BJ (cell line): ENCODE measurements at regions of chr10 and their contacts with region 1.

Region 1: DNA sequence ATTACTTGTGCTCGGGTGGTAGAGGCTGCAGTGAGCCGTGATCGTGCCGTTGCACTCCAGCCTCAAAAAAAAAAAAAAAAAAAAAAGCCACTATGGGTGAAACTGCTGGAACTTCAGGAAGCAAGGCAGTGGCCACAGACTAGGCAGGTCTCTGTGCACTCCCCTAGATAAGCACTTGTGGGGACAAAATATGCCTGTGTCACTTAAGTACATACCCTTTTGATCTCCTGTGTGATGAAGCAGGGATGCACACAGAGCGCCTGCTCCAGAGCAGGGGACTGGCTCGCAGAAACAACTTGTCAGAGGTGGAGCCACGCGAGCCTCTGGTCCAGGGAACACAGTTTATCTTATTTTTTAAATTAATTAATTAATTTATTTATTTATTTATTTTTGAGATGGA is 42.9 kb upstream of the PSAP start:
- DNase-seq: no peak
- H3K4me3 ChIP-seq: no peak overlapping the region
- H3K27me3 ChIP-seq: no peaks in the 10 kb centered on the region
- CTCF ChIP-seq: no peak

Region 2: DNA sequence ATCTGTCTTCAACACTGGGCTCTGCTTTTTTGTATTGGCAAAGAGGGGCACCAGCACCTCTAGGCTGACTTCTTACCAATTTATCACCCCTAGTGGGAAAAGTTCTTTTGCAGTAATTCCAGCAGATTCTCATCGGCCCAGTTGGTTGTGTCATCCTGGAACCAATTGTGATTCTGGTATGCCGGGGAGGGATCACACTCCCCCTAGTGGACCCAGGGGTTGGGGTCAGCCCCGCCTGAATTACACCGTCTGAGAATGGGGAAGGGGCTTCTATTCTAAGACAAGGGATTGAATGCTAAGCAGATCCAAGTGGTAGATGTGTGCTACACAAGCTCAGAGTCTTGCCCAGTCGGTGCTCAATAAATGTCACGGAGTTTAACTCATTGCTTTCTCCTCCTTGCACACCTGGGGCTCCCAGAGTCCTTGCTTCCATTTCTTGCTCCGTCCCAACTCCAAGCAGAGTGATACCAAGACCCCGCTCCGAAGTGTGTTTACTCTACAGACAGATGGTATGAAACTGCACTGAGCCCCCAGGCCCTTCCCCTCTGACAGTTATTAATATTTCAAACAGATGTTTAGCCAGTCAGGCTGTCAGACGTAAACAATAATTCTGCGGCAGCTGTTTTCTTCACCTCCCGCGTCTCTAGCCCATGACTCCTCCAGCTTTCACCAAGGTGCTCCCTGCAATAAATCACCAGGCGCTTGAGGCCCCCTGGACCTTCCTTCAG is 246.2 kb before region 1 on chr10:
- CTCF ChIA-PET with region 1: no interaction called
- POLR2A ChIA-PET with region 1: no interaction called
- DNase-seq: no peak
- H3K4me3 ChIP-seq: no peak overlapping the region
- H3K27me3 ChIP-seq: peaks cover 11% of the 10 kb centered on the region
- CTCF ChIP-seq: peak; percentile 51

Region 3: GRCh38 chr10:71731791-71732190 is 162.1 kb before region 1 on chr10:
- CTCF ChIA-PET with region 1: no interaction called
- POLR2A ChIA-PET with region 1: no interaction called
- DNase-seq: no peak
- H3K4me3 ChIP-seq: no peak overlapping the region
- H3K27me3 ChIP-seq: no peaks in the 10 kb centered on the region
- CTCF ChIP-seq: no peak

Region 4: DNA sequence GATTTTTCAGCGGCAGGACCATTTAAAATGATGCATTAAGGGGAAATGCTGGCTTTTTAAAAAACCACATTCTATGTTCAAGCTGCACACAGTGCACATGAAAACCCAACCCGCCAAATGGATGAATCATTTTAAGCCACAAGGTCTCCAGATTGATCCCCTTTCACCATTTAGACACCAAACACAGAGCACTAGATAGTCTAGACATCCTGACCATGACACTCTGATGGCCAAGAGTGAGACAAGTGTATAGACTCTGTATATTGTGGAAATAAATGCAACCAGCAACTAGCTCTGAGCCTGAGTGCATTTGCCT is 71.5 kb before region 1 on chr10:
- CTCF ChIA-PET with region 1: interaction called, 17 read pairs
- POLR2A ChIA-PET with region 1: no interaction called
- DNase-seq: peak; percentile 22
- H3K4me3 ChIP-seq: no peak overlapping the region
- H3K27me3 ChIP-seq: no peaks in the 10 kb centered on the region
- CTCF ChIP-seq: no peak

Region 5: GRCh38 chr10:71860243-71861029 is 33.5 kb before region 1 on chr10:
- CTCF ChIA-PET with region 1: interaction called, 11 read pairs
- POLR2A ChIA-PET with region 1: no interaction called
- DNase-seq: peak; percentile 100
- H3K4me3 ChIP-seq: no peak overlapping the region
- H3K27me3 ChIP-seq: no peaks in the 10 kb centered on the region
- CTCF ChIP-seq: no peak

Region 6: GRCh38 chr10:71905164-71905563 is 11.2 kb after region 1 on chr10:
- CTCF ChIA-PET with region 1: interaction called, 19 read pairs
- POLR2A ChIA-PET with region 1: no interaction called
- DNase-seq: no peak
- H3K4me3 ChIP-seq: no peak overlapping the region
- H3K27me3 ChIP-seq: peaks cover 3% of the 10 kb centered on the region; the same call in 1 of the 2 replicates
- CTCF ChIP-seq: no peak

Region 7: GRCh38 chr10:72038458-72039001 is 144.6 kb after region 1 on chr10:
- CTCF ChIA-PET with region 1: interaction called, 11 read pairs
- POLR2A ChIA-PET with region 1: no interaction called
- DNase-seq: peak; percentile 38
- H3K4me3 ChIP-seq: no peak overlapping the region
- H3K27me3 ChIP-seq: no peaks in the 10 kb centered on the region
- CTCF ChIP-seq: no peak

Region 8: GRCh38 chr10:72637398-72637857 is 743.5 kb after region 1 on chr10:
- CTCF ChIA-PET with region 1: no interaction called
- POLR2A ChIA-PET with region 1: no interaction called
- DNase-seq: peak; percentile 8
- H3K4me3 ChIP-seq: no peak overlapping the region
- H3K27me3 ChIP-seq: no peaks in the 10 kb centered on the region
- CTCF ChIP-seq: no peak